ENCODE measurements at regions of chr7 and their contacts with region 1.

Region 1: GRCh38 chr7:56003749-56004148 is 39.4 kb downstream of the NIPSNAP2 start:
- DNase-seq: no peak

Region 2: GRCh38 chr7:56051339-56052191 is 47.8 kb after region 1 on chr7 and contains the starts of genes CCT6A and PSPH:
- intact Hi-C with region 1: no loop called
- DNase-seq: peak; percentile 99
- total RNA-seq, gene CCT6A: 75.9 to 87.9 TPM
- total RNA-seq, gene PSPH: 5.0 to 6.6 TPM

Region 3: GRCh38 chr7:56063882-56064625 is 60.3 kb after region 1 on chr7 and contains the start of gene SUMF2:
- intact Hi-C with region 1: no loop called
- DNase-seq: peak; percentile 97
- total RNA-seq, gene SUMF2: 84.6 to 129 TPM

Region 4: GRCh38 chr7:56074371-56074791 is 70.6 kb after region 1 on chr7:
- intact Hi-C with region 1: loop called (anchors 5 kb)
- DNase-seq: peak; percentile 92

Region 5: DNA sequence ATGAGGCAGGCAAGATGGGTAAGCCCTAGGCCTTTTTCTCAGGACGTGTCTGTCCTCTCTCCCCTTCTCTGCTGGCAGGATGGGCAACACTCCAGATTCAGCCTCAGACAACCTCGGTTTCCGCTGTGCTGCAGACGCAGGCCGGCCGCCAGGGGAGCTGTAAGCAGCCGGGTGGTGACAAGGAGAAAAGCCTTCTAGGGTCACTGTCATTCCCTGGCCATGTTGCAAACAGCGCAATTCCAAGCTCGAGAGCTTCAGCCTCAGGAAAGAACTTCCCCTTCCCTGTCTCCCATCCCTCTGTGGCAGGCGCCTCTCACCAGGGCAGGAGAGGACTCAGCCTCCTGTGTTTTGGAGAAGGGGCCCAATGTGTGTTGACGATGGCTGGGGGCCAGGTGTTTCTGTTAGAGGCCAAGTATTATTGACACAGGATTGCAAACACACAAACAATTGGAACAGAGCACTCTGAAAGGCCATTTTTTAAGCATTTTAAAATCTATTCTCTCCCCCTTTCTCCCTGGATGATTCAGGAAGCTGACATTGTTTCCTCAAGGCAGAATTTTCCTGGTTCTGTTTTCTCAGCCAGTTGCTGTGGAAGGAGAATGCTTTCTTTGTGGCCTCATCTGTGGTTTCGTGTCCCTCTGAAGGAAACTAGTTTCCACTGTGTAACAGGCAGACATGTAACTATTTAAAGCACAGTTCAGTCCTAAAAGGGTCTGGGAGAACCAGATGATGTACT is 75.9 kb after region 1 on chr7:
- intact Hi-C with region 1: loop called (anchors 5 kb)
- DNase-seq: peak; percentile 91

Measured in posterior vena cava (tissue), 2 donors.